Tibial artery (tissue), 4 donors: ENCODE measurements at regions of chr12 and their contacts with region 1.

Region 1: GRCh38 chr12:80186727-80187217 is 87.4 kb downstream of the OTOGL start:
- DNase-seq: peak; percentile 69 to 70
- H3K4me3 ChIP-seq: no peak overlapping the region
- H3K27ac ChIP-seq: peak overlapping the region; percentile 72 to 88
- H3K4me1 ChIP-seq: peaks cover 0 to 29% (median 4%) of the 10 kb centered on the region in 4 donors
- H3K27me3 ChIP-seq: no peaks in the 10 kb centered on the region
- CTCF ChIP-seq: peak; percentile 63 to 71

Region 2: DNA sequence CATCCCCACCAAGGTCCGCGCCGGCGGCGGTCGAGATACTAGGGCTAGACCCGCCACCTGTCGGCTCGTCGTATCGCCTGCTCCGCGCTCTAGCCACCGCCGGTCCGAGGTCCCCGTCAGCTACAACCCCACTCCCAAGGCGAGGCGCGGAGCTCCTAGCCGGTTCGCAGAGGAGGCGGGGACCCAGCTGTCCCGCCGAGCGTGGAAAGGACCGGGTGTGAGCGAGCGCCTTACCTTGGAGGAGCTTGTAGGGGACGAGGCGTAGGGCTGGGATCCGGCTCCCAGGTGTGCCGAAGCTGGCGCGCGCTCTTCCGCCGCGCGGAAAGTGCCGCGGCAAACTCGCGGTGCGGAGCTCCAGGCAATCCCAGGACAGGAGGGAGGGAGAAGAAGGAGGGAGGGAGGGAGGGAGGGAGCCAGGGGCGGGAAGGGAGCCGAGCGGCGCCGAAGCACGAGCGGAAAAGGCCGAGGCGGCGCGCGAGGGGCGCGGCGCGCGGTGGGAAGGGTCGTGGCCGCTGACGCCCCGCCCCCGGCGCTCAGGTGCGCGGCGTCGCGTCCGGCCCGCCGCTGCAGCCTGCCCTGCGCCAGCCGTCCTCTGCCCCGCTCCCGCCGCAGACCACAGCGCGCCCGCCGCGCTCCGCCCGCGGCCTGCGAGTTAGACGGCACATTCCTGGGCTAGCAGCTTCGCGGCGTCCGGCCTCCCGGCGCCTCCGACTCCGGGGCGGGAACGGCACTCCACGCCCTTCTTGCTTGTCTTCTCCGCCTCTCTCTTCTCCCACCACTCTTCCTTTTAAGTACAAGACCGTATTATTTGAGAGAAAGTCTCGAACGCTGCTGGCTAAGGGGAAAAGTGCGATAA is 495.9 kb before region 1 on chr12 and contains the start of gene PAWR:
- intact Hi-C with region 1: loop called (anchors 5 kb)
- DNase-seq: peak; percentile 57 to 82
- H3K4me3 ChIP-seq: peak within 1 kb of the TSS; percentile 93 to 97
- H3K27ac ChIP-seq: peak within 1 kb of the TSS; percentile 98
- H3K4me1 ChIP-seq: peaks cover 0 to 27% (median 6%) of the 10 kb centered on the region in 4 donors
- H3K27me3 ChIP-seq: no peaks in the 10 kb centered on the region
- CTCF ChIP-seq: peak in 1 of 2 experiments; percentile 30

Region 3: DNA sequence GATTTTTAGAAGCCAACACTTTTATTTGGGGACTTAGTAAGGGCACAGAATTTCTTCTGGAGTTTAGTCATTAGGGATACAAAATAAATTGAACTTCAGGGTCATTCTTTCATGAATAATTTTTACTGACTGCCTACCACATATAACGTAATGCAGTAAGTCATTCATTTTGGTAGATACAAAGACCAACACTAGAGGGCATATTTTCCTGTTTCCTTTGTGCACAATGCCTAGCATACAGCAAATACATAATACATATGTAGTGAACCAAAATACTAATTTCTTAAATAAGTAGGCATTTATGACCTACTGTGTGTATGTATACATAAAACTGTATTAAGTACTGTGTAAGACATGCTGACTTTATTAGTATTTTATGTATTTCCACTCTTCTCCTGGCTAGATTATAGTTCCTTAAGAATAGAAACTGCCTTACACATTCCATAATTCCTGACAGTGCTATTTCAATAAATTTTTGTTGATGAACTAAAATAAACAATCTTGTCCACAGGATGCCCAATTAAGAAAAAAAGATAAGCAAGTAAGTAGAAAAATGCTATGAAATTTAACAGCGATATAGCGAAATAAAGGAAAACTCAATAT is 299.8 kb before region 1 on chr12:
- intact Hi-C with region 1: loop called (anchors 10 kb)
- DNase-seq: no peak
- H3K4me3 ChIP-seq: no peak overlapping the region
- H3K27ac ChIP-seq: peak overlapping the region; percentile 15 to 53
- H3K4me1 ChIP-seq: peaks cover 0 to 100% (median 46%) of the 10 kb centered on the region in 4 donors
- H3K27me3 ChIP-seq: no peaks in the 10 kb centered on the region
- CTCF ChIP-seq: peak; percentile 49 to 53

Region 4: DNA sequence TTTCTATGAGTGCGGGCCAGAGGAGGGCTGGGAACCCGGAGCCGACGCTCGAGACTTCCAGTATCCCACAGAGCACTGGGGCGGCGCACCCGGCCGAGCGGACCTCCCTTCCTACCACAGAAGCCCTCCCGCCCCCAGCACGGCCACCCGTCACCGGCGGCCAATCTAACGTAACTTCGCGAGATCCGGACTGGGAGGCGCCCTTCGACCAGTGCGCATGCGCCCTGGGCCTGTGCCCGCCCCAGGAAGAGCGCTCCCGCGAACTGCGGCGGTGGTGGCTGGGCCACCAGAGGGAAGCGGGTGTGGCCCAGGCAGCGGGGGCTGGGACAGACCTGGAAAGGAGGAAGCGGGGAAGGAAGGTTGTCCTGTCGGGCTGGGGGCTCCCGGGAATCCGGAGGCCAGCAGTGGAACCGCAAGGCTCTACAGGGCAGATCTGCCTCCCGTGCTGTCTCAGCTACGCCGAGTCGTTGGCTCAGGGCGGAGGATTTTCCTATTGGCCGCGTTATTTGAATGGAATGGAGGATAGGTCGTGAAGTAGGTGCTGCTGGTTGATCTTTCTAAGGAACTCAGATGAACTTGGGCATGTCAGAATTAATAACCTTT is 251.7 kb before region 1 on chr12 and contains the start of gene PPP1R12A:
- intact Hi-C with region 1: loop called (anchors 5 kb)
- DNase-seq: peak; percentile 97 to 99
- H3K4me3 ChIP-seq: peak within 1 kb of the TSS; percentile 70 to 88
- H3K27ac ChIP-seq: peak within 1 kb of the TSS; percentile 98
- H3K4me1 ChIP-seq: peaks cover 0 to 39% (median 9%) of the 10 kb centered on the region in 4 donors
- H3K27me3 ChIP-seq: no peaks in the 10 kb centered on the region
- CTCF ChIP-seq: peak; percentile 17 to 22